ENCODE measurements at regions of chr22 and their contacts with region 1.

Region 1: DNA sequence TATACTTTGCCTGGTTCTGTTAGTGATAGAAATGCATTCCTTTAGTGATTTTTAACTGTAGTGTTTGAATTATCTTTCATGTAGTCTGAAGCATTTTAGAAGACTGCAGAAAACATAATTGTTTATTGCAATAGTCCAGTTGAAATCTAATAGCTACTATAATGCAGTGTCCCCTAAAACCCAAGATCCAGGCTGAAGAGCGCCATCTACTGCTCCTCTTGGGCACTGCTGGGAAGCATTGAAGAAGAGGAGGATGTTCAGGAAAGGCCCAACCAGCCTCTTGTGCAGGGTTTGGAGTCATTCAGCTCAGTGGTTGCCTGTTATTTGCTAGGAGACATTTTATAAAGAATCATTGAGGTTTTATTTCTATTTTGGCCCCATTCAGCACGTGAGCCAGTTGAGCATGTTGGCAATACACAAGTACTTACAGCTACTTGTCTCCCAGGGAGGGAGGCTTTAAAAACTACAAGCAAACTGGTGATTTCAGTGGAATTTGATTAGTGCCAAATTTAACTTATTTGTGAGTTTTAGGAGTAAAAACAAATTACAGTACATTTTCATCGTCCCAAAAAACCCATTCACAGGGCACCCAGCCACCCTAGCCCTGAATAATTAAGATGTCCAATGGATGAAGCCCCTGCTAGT is 74.9 kb upstream of the HORMAD2 start:
- DNase-seq: peak; percentile 27 to 53
- ATAC-seq: peak; percentile 68 to 90; a peak in 3 of 6 replicates
- H3K4me3 ChIP-seq: no peak overlapping the region
- H3K27ac ChIP-seq: no peak overlapping the region
- H3K4me1 ChIP-seq: peaks cover 4% of the 10 kb centered on the region; the same call in 1 of the 3 replicates
- CTCF ChIP-seq: peak; percentile 88
- EP300 ChIP-seq: no peak
- POLR2A ChIP-seq: no peak
- RAD21 ChIP-seq: peak; percentile 86 to 92

Region 2: DNA sequence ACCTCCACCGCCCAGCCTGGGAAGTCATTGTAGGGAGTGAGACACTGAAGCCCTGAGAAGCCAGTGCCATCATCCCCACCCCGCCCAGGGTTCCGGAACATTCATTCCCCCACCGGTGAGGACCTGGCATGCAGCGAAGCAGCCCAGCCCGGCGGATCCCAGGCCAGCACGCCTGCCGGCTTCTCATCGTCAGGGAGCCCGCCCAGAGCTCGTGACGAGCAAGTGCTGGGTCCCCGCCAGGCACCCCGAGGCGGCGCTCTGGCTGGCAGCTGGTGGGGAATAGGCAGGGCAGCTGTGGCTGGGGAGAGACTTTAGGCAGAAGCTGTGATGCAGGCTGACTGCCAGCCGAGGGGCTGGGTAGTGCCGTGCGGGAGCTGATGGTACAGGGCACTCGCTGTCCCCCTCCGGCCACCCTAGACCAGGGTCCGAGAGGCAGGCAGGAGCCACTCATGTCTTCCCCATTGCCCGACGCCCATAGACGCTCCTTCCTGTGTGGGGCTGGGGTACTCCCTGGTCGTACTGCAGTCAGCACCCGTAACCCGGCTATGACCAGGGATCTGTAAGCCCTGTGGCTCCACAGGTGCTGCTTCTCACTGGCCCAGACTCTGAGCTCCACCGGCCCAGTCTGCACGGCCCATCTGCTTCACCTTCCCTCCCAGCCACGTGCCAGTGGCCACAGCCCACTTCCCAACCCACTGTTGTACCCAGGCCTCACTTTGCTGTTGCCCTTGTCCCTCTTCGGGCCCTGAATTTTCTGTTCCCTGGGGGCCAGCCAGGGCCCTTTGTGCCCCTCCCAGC is 310.0 kb before region 1 on chr22:
- CTCF ChIA-PET with region 1: interaction called, 22 read pairs
- POLR2A ChIA-PET with region 1: no interaction called
- DNase-seq: no peak
- ATAC-seq: no peak
- H3K4me3 ChIP-seq: no peak overlapping the region
- H3K27ac ChIP-seq: no peak overlapping the region
- H3K4me1 ChIP-seq: no peaks in the 10 kb centered on the region
- CTCF ChIP-seq: no peak
- EP300 ChIP-seq: no peak
- POLR2A ChIP-seq: no peak
- RAD21 ChIP-seq: no peak

Region 3: GRCh38 chr22:29727131-29727523 is 278.2 kb before region 1 on chr22:
- CTCF ChIA-PET with region 1: interaction called, 17 read pairs
- POLR2A ChIA-PET with region 1: no interaction called
- DNase-seq: peak; percentile 33 to 51
- ATAC-seq: peak; percentile 56 to 76
- H3K4me3 ChIP-seq: no peak overlapping the region
- H3K27ac ChIP-seq: 0 out of 6 replicates have a peak overlapping the region, but pooled peaks of 1 of the 2 experiments have one; percentile 26
- H3K4me1 ChIP-seq: no peaks in the 10 kb centered on the region
- CTCF ChIP-seq: peak; percentile 36
- EP300 ChIP-seq: no peak
- POLR2A ChIP-seq: no peak
- RAD21 ChIP-seq: peak; percentile 45 to 53

Region 4: DNA sequence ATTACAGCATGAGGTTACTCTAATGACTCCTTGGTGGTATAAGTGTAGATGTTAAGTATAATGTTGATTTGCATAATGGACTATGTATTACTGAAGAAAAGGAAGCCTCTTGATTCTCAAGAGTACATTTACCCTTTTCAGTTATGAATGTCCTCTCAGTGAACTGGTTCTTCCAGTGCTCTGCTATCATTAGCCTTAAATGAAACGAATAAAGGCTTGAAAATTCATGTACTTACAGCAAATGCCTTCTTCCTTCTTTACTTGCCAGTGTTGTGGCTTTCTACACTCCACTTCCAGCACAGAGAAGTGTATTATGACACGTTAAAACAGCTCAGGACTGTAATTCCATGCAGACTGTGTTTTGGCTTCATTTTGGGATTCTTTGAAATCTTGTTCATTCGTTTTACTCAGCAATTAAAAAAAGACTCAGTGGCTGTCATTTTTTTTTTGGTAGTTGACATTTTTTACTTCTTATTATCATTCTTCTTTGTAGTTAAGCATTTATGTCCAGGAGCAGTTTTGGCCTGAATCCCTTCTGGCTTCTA is 25.5 kb before region 1 on chr22:
- CTCF ChIA-PET with region 1: interaction called, 16 read pairs
- POLR2A ChIA-PET with region 1: no interaction called
- DNase-seq: no peak
- ATAC-seq: no peak
- H3K4me3 ChIP-seq: no peak overlapping the region
- H3K27ac ChIP-seq: no peak overlapping the region
- H3K4me1 ChIP-seq: peaks cover 12% of the 10 kb centered on the region
- CTCF ChIP-seq: no peak
- EP300 ChIP-seq: no peak
- POLR2A ChIP-seq: no peak
- RAD21 ChIP-seq: no peak

Region 5: GRCh38 chr22:30015846-30016245 is 10.5 kb after region 1 on chr22:
- CTCF ChIA-PET with region 1: interaction called, 16 read pairs
- POLR2A ChIA-PET with region 1: no interaction called
- DNase-seq: no peak
- ATAC-seq: no peak
- H3K4me3 ChIP-seq: no peak overlapping the region
- H3K27ac ChIP-seq: no peak overlapping the region
- H3K4me1 ChIP-seq: no peaks in the 10 kb centered on the region
- CTCF ChIP-seq: no peak
- EP300 ChIP-seq: no peak
- POLR2A ChIP-seq: no peak
- RAD21 ChIP-seq: no peak